ENCODE measurements at regions of chr5 and their contacts with region 1.

Region 1: GRCh38 chr5:132639706-132640130 is 18.3 kb upstream of the IL13 start:
- DNase-seq: peak; percentile 50
- ATAC-seq: peak; percentile 78
- H3K4me3 Mint-ChIP-seq: peak overlapping the region; percentile 41
- H3K27ac Mint-ChIP-seq: peak overlapping the region; percentile 88
- H3K4me1 Mint-ChIP-seq: peaks cover 78% of the 10 kb centered on the region
- H3K27me3 Mint-ChIP-seq: no peaks in the 10 kb centered on the region

Region 2: DNA sequence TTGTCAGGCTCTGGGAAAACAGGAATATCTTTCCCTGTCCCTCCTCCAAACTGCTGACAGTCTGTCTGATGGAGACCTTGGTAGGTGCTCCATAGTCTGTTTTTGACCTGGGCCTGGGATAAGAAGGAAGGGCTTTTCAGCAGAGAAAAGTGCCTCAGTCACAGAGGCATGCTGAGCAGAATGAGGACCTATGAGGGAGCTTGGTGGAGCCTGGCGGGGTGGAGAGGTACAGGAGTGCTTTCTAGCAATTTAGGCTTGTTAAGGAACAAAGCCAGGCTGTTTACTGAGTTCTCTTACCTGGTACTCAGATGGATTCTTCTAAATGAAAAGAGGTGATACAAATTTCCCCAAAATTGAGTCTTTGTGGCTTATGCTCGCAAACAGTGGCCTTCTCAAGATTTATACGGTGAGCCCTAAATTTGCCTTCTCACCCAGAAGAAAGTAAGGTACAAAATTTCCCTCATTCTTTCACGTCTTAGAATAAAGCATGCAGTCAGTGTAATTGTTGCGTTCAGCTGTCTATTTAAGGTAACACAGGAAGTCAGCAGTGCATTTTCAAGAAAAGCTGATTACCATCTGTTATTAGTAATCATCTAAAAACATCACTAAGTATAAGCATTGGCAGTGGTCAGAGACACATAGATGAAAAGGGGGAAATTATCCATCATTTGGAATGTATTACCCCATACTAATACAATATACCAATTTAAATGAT is 10.3 kb before region 1 on chr5:
- POLR2A ChIA-PET with region 1: interaction called, 11 read pairs
- DNase-seq: no peak
- ATAC-seq: peak; percentile 33
- H3K4me3 Mint-ChIP-seq: no peak overlapping the region
- H3K27ac Mint-ChIP-seq: peak overlapping the region; percentile 55
- H3K4me1 Mint-ChIP-seq: peaks cover 21% of the 10 kb centered on the region
- H3K27me3 Mint-ChIP-seq: no peaks in the 10 kb centered on the region